Astrocyte of the cerebellum (primary cell): ENCODE measurements at regions of chr11 and their contacts with region 1.

Region 1: DNA sequence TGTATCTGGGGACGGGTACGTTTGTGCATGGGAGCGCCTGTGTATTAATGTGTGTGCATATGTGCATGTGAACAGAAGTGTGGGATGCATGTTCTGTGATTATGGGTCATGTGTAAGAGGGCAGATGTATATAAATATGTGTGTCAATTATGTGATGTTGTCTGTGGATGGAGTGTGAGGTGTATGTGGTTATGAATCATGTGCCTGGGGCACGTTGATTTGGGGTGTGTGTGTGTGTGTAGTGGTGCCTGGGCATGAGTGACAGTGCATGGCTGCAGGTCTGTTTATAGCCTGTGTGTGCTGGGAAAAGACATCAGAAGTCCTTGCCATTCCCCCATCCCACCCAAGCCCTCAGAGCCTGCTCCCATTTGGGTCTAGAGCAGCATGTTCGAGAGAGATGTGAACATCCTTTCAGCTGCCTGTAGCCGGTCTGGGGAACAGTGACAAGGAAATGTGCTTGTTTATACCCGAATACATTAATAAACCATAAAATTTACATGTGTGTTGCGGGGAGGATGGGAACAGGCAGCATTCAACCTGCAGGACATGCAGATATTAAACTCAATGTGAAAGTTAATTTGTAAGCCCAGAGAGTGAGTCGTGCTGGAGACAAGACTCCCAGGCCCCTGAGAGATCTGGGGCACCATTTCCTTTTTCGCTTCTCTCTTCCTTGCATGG is 129.0 kb downstream of the NECTIN1 start:
- DNase-seq: no peak
- H3K4me3 ChIP-seq: no peak overlapping the region
- CTCF ChIP-seq: no peak

Region 2: GRCh38 chr11:119560291-119560690 is 39.7 kb before region 1 on chr11:
- in situ Hi-C with region 1: no loop called
- DNase-seq: no peak
- H3K4me3 ChIP-seq: no peak overlapping the region
- CTCF ChIP-seq: no peak

Region 3: DNA sequence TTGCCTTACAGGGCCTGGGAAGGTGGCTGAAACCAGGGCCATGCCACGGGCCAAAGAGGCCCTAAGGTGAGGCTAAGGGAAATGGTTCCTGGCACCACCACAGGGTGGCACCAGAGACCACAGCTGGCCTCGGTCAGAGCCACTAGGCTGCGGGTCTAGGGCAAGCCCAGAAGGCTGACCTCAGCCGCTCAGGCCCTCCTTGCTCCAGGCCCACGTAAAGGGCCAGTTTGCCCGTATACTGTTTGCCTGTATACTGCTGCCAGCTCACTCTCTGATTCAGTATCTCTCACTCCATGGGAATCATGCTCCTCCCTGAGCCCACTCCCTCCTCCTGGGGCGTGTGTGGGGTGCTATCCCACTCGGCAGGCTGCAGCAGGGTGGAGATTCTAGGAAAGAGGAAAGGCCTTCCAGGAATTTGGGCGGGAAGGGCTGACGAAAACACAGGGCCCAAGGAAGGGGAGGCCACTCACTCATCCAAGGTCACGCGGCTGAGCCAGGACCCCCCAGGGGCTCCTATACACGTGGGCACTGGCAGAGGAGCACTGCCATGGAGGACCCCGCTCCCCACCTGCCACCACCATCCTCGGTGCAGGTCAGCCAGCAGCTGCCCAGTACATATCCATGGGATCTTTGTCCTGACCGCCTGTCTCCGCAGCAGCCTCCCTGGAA is 66.6 kb after region 1 on chr11:
- in situ Hi-C with region 1: loop called (anchors 10 kb)
- DNase-seq: no peak
- H3K4me3 ChIP-seq: no peak overlapping the region
- CTCF ChIP-seq: peak; percentile 90

Region 4: DNA sequence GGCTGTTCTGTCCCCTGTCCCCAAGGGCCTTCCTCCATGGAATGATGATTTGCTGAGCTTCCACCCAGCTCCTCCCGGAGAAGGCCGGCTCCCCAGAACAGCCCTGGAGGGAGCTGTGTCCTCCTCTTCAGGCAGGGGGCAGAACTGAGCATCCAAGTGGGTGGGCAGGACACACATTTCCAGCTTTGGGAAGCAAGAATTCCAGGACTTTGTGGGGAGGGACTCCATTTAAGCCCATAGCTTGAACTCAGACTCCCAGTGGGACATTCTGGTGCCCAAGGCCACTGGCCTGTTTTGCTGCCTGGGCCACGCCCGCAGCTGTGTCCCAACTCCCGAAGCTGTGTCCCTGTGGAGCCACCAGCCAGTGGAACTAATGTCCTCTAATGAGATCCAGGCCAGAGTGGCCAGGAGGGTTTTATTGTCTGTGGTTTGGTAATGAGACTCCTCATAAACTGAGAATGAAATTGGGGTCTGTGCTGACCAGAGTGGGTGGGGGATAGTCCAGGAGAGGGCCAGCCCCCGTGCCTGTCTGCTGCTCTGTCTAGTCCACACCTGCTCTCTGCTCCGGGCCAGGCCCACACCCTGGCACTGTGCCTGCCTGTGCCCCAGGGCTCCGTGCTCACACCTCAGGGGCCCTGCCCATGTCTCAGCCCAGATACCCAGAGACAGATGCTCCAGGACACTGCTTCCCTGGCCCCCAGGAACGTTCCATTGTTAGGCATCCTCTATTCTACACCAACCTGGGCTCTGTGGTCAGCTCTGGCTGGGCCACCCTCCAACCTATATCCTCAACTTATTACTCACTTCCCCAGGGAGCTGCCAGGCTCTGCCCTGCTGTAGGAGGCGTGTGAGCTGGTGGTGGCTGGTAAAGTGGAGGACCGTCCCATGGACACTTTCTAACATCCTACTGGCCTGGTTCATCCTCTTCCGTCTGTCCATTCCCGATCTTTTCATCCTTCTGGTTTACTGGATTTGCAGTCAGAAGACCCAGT is 121.4 kb after region 1 on chr11:
- in situ Hi-C with region 1: loop called (anchors 5 kb)
- DNase-seq: no peak
- H3K4me3 ChIP-seq: no peak overlapping the region
- CTCF ChIP-seq: peak; percentile 70